Right ventricle myocardium superior (tissue), 1 donor: ENCODE measurements at regions of chr13 and their contacts with region 1.

Region 1: GRCh38 chr13:101942038-101942437 is 459.8 kb downstream of the FGF14 start:
- DNase-seq: no peak
- ATAC-seq: peak; percentile 97

Region 2: GRCh38 chr13:101757446-101758039 is 184.5 kb before region 1 on chr13:
- intact Hi-C with region 1: no loop called
- DNase-seq: no peak
- ATAC-seq: peak; percentile 80

Region 3: DNA sequence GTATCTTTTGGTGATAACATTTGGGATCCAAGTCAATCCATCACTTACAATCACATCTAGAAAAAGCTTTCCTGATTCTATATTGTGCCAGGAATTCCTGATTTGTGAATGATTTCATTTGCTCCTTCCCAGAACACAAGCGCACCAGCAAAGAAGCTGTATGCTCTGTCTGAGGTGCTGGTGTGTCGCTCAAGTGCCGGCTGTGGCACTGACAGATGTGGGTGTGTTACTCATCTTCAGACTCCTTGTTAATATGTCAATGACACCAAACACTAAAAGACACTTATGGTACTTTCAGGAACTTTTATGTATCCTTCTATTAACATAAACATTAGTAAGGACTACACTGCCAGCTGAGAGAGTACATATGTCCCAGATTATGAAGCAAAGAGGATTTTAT is 60.4 kb before region 1 on chr13:
- intact Hi-C with region 1: no loop called
- DNase-seq: no peak
- ATAC-seq: no peak

Region 4: DNA sequence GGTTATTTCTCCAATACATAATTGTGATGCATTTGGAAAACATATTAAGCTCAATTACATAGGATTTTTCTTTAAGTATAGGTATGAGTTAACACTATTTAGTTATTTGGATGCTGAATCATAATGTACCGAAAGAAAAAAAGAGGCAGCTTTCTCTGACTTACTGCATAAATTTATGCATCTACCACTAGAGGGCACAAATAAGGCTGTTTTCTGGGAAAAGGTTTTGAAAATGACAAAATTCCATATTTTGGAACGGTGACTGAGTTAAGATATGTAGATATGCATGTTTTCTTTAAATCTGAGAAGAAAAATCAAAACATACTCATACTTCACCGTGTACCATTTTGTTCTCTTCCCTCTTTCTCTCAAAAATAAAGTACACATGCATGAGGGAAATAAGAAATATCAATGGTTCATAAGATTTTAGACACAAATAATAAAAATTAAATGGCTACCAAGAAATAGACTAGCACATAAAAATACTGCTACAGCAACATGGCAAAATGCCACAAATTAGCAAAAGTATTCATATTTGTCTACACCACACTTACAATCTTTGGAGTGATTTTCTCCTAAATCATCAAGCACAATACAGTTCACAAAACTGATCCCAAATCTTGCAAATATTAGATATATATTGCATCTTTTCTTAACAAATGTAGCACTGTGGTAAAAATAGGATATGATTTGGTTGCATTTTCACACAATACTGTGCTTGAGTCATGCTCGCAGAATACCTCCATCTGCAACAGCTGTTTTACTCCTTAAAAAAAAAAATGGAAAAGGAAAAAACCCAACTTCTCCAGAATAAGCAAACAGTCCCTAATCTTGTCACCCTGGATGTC is 199.8 kb after region 1 on chr13:
- intact Hi-C with region 1: loop called (anchors 10 kb)
- DNase-seq: no peak
- ATAC-seq: no peak

Region 5: GRCh38 chr13:102460801-102461200 is 518.8 kb after region 1 on chr13:
- intact Hi-C with region 1: loop called (anchors 5 kb)
- DNase-seq: no peak
- ATAC-seq: no peak

Region 6: GRCh38 chr13:102550507-102550906 is 608.5 kb after region 1 on chr13:
- intact Hi-C with region 1: loop called (anchors 5 kb)
- DNase-seq: no peak
- ATAC-seq: no peak